CD8-positive, alpha-beta T cell (primary cell): ENCODE measurements at regions of chr1 and their contacts with region 1.

Region 1: DNA sequence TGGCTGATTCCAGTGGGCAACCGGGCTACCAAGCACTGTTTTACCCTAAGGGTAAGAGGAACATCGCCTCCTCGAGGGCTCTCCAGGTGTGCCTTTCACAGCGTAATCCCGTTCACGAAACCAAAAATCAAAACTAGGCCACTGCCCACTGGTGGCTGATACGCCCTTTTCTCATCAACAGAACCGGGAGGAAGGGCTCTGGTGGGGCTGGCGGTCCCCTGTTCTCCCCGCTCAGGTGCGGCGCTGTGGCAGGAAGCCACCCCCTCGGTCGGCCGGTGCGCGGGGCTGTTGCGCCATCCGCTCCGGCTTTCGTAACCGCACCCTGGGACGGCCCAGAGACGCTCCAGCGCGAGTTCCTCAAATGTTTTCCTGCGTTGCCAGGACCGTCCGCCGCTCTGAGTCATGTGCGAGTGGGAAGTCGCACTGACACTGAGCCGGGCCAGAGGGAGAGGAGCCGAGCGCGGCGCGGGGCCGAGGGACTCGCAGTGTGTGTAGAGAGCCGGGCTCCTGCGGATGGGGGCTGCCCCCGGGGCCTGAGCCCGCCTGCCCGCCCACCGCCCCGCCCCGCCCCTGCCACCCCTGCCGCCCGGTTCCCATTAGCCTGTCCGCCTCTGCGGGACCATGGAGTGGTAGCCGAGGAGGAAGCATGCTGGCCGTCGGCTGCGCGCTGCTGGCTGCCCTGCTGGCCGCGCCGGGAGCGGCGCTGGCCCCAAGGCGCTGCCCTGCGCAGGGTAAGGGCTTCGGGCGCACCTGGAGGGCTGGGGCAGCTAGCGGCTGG is at the start of gene IL6R:
- DNase-seq: peak; percentile 40 to 86 (median 76)
- ATAC-seq: peak; percentile 71
- H3K4me3 ChIP-seq: peak within 1 kb of the TSS; percentile 48 to 58
- H3K4me3 Mint-ChIP-seq: peak within 1 kb of the TSS; percentile 88
- H3K27ac ChIP-seq: peak within 1 kb of the TSS; percentile 35 to 57
- H3K27ac Mint-ChIP-seq: peak within 1 kb of the TSS; percentile 93
- H3K4me1 ChIP-seq: peaks cover 64% of the 10 kb centered on the region
- H3K4me1 Mint-ChIP-seq: peaks cover 84% of the 10 kb centered on the region
- H3K27me3 ChIP-seq: no peaks in the 10 kb centered on the region
- H3K27me3 Mint-ChIP-seq: no peaks in the 10 kb centered on the region
- CTCF ChIP-seq: peak; percentile 33
- total RNA-seq, gene IL6R: 10.0 to 12.0 TPM

Region 2: GRCh38 chr1:154141240-154141639 is 263.9 kb before region 1 on chr1:
- CTCF ChIA-PET with region 1: no interaction called
- POLR2A ChIA-PET with region 1: no interaction called
- intact Hi-C with region 1: no loop called
- DNase-seq: no peak
- ATAC-seq: no peak
- H3K4me3 ChIP-seq: no peak overlapping the region
- H3K4me3 Mint-ChIP-seq: no peak overlapping the region
- H3K27ac ChIP-seq: no peak overlapping the region
- H3K27ac Mint-ChIP-seq: no peak overlapping the region
- H3K4me1 ChIP-seq: no peaks in the 10 kb centered on the region
- H3K4me1 Mint-ChIP-seq: no peaks in the 10 kb centered on the region
- H3K27me3 ChIP-seq: no peaks in the 10 kb centered on the region
- H3K27me3 Mint-ChIP-seq: no peaks in the 10 kb centered on the region
- CTCF ChIP-seq: no peak

Region 3: GRCh38 chr1:154335025-154335714 is 70.0 kb before region 1 on chr1:
- CTCF ChIA-PET with region 1: interaction called, 52 read pairs
- POLR2A ChIA-PET with region 1: no interaction called
- intact Hi-C with region 1: loop called in 1 of 2 experiments (anchors 5 kb)
- DNase-seq: peak; percentile 78 to 95 (median 93)
- ATAC-seq: peak; percentile 94
- H3K4me3 ChIP-seq: no peak overlapping the region
- H3K4me3 Mint-ChIP-seq: peak overlapping the region; percentile 48
- H3K27ac ChIP-seq: peak overlapping the region; percentile 22 to 75
- H3K27ac Mint-ChIP-seq: peak overlapping the region; percentile 95
- H3K4me1 ChIP-seq: peaks cover 78% of the 10 kb centered on the region
- H3K4me1 Mint-ChIP-seq: peaks cover 75% of the 10 kb centered on the region
- H3K27me3 ChIP-seq: no peaks in the 10 kb centered on the region
- H3K27me3 Mint-ChIP-seq: no peaks in the 10 kb centered on the region
- CTCF ChIP-seq: peak; percentile 88

Region 4: DNA sequence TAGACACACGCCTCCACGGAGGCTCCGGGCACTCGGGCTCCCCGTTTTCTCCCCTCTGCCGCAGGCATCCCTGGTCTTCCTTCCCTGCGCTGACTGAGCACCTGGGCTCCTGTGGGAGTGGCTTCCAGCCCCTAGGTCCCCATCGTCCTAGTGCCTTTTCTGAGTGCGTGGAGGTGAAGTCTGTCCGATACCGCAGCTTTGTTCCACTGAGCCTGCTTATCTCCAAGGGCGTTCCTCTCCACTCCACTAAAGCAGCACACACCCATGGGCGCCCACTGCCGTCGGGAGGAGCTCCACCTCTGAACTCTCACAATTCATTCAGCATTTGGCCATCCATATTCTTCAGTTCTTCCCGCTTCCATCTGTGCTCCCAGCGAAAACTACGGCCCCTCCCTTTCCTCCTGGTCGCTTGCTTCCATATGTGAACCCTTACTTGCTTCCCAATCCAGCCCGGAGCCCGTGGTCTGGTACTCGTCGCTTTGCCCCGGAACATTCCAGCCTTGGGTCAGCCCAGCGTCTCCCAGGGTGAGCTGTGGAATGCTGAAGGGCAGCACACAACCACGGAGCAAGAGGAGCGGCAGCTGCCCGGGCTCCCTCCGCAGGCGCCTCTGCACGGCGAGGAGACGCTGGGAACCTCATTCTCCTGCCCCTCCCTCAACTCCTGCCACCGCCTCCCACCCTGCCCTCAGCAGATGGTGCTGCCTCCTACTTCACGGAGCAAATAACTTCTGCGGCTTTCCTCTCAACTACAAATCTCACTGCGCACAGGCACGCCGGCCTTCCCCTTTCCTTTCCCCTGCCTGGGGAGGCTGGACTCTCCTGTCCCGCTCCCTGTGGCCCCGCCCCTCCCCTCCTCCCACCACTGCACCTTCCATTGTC is 52.4 kb before region 1 on chr1:
- CTCF ChIA-PET with region 1: interaction called, 19 read pairs
- POLR2A ChIA-PET with region 1: interaction called, 4 read pairs
- intact Hi-C with region 1: loop called (anchors 1 to 2 kb)
- DNase-seq: peak in 7 of 9 experiments; percentile 21 to 72 (median 55)
- ATAC-seq: peak; percentile 73
- H3K4me3 ChIP-seq: peak overlapping the region; percentile 45 to 63
- H3K4me3 Mint-ChIP-seq: peak overlapping the region; percentile 91
- H3K27ac ChIP-seq: no peak overlapping the region
- H3K27ac Mint-ChIP-seq: peak overlapping the region; percentile 81
- H3K4me1 ChIP-seq: peaks cover 27% of the 10 kb centered on the region
- H3K4me1 Mint-ChIP-seq: peaks cover 44% of the 10 kb centered on the region
- H3K27me3 ChIP-seq: no peaks in the 10 kb centered on the region
- H3K27me3 Mint-ChIP-seq: no peaks in the 10 kb centered on the region
- CTCF ChIP-seq: no peak

Region 5: DNA sequence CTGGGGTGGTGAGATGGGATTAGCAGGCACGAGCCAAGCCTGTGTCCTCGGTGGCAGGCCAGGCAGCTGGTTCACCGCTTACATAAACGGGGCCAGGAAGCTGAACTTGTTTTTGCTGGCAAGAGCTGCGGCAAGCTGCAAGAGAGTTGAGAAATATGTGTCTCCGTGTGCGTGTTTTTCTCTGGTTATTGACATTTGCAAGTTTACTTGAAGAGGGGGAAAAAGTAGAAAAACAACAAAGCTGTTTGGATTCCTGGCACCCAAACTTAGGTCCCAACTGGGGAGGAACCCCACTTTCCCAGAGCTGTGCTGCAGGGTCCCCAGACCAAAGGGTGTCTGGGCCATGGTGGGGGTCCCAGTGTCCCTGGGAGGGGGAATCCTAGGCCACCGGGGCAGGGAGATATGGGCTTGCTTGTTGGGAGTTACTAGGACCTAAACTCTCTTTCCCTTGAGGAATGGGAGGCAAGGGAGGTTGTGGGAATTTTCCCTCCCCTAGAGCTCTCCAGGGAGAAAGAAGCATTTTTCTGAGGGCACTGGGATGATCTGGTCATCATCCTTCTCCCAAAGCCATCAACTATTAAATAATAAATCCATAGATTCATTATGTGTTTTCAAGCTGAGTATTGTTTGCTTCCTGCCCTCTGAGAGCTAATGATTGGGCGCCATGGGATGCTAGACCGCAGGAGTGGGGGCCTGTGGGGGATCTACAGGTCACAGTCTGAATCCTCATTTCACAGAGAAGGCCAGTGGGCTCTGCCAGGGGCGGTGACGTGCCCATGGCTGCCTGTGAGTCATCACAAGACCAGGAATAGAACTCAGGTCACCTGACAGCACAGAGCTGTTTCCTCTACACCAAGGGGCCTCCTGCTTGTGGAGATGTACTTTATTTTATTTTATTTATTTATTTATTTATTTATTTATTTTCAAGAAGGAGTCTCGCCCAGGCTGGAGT is 14.7 kb after region 1 on chr1:
- CTCF ChIA-PET with region 1: interaction called, 11 read pairs
- POLR2A ChIA-PET with region 1: interaction called, 20 read pairs
- intact Hi-C with region 1: loop called in 1 of 2 experiments (anchors 1 kb)
- DNase-seq: peak in 7 of 9 experiments; percentile 21 to 76 (median 53)
- ATAC-seq: peak; percentile 71
- H3K4me3 ChIP-seq: peak overlapping the region in 1 of 2 experiments; percentile 39
- H3K4me3 Mint-ChIP-seq: peak overlapping the region; percentile 76
- H3K27ac ChIP-seq: peak overlapping the region; percentile 29 to 46
- H3K27ac Mint-ChIP-seq: peak overlapping the region; percentile 94
- H3K4me1 ChIP-seq: peaks cover 60% of the 10 kb centered on the region
- H3K4me1 Mint-ChIP-seq: peaks cover 66% of the 10 kb centered on the region
- H3K27me3 ChIP-seq: no peaks in the 10 kb centered on the region
- H3K27me3 Mint-ChIP-seq: no peaks in the 10 kb centered on the region
- CTCF ChIP-seq: no peak

Region 6: DNA sequence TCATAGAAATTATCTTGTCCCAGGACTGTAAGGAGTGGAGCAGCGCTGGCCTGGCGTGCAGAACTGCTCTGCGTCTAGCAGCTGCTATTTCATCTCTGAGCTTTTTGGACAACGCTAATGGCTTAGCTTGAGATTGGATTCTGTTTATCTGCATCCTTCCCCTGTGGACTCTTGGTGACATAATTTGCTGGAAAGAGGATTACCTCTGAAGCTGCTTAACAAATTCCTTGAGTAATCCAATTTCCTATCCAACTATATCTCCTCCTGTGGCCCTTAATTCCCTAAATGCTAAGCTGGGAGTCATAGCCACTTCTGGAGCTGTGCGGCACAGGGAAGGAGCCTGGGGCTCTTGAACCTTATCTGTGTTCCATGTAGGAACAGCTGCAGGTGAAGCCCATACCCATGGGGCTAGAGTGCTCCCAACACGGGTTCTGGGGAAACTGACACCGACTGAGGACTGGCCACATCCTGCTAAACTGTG is 43.2 kb after region 1 on chr1:
- CTCF ChIA-PET with region 1: interaction called, 10 read pairs
- POLR2A ChIA-PET with region 1: interaction called, 3 read pairs
- intact Hi-C with region 1: no loop called
- DNase-seq: no peak
- ATAC-seq: no peak
- H3K4me3 ChIP-seq: no peak overlapping the region
- H3K4me3 Mint-ChIP-seq: no peak overlapping the region
- H3K27ac ChIP-seq: no peak overlapping the region
- H3K27ac Mint-ChIP-seq: no peak overlapping the region
- H3K4me1 ChIP-seq: peaks cover 14% of the 10 kb centered on the region
- H3K4me1 Mint-ChIP-seq: peaks cover 18% of the 10 kb centered on the region
- H3K27me3 ChIP-seq: no peaks in the 10 kb centered on the region
- H3K27me3 Mint-ChIP-seq: no peaks in the 10 kb centered on the region
- CTCF ChIP-seq: no peak

Region 7: DNA sequence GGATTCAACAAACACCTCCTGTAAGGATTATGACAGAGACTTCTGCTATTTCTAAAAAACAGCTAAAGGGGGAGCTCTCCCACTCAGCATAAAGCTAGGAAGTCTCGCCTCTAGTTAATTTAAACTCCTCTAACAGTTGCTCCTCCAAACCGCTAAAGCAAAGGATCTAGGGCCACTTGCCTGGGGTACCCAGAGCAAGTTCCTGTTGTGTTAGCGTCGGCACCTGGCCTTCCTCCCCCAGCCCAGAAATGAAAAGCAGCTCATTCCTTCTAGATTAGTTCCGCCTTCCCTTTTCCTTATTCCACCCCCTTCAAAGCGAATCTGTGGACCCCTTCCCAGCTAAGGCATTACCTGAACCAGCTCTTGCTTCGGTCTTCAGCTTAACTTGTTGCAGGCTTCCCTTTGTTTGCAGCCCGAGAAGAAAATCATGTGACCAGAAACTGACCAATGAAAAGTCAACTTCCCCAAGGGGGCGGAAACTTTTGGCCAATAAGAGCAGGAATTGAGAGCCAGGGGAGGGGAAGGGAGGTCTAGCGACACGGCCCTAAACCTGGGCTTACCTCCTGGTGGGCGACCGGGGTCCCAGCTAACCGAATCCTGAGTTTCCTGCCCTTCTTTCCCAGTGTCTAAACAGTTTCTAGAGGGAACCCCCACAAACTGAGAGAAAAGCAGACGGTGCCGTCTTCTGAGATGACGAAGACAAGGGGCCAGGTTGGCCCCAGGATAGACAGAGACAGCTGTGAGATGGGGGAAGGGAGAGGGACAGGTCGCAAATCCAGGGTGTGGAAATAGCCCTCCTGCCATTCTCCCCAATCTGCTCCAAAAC is 550.8 kb after region 1 on chr1 and contains the start of gene PBXIP1:
- CTCF ChIA-PET with region 1: no interaction called
- POLR2A ChIA-PET with region 1: no interaction called
- intact Hi-C with region 1: loop called in 1 of 2 experiments (anchors 5 kb)
- DNase-seq: peak; percentile 65 to 96 (median 84)
- ATAC-seq: peak; percentile 40
- H3K4me3 ChIP-seq: peak within 1 kb of the TSS; percentile 71 to 76
- H3K4me3 Mint-ChIP-seq: peak within 1 kb of the TSS; percentile 99
- H3K27ac ChIP-seq: peak within 1 kb of the TSS; percentile 98
- H3K27ac Mint-ChIP-seq: peak within 1 kb of the TSS; percentile 99
- H3K4me1 ChIP-seq: peaks cover 60% of the 10 kb centered on the region
- H3K4me1 Mint-ChIP-seq: peaks cover 76% of the 10 kb centered on the region
- H3K27me3 ChIP-seq: no peaks in the 10 kb centered on the region
- H3K27me3 Mint-ChIP-seq: no peaks in the 10 kb centered on the region
- CTCF ChIP-seq: no peak
- total RNA-seq, gene PBXIP1: 315 to 319 TPM